Spleen (tissue), 13 donors: ENCODE measurements at regions of chr3 and their contacts with region 1.

Region 1: DNA sequence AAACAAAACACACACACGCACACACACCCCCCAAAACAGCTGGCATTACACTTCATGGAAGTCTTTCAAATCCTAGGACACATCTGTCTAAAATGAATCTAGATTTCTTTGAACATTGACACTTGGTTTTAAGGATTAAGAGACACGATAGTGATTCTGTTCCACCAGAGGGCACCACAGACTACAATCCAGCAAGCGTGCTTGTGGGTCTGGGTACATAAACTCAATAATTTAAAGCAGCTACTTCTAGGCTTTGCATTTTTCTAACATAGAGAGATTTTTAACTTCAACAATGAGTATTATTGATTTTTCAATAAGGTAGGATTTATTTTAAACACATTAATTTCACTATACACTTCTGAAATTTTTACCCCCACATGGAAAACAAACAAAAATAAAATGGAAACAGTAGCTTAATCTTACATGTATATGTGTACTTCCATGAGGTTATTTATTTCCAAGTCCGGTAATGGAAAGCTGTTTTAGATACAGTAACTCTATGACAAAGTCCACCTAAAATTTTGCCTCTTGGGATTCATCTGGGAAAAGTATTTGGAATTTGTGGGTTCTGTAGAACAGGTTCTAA is 564.0 kb upstream of the TGFBR2 start:
- DNase-seq: no peak
- H3K4me3 ChIP-seq: no peak overlapping the region
- H3K27ac ChIP-seq: no peak overlapping the region
- H3K4me1 ChIP-seq: peaks cover 0 to 8% (median 2%) of the 10 kb centered on the region in 6 donors
- H3K27me3 ChIP-seq: peaks cover 0 to 7% (median 0%) of the 10 kb centered on the region in 7 donors
- CTCF ChIP-seq: peak; percentile 31 to 66 (median 55)
- POLR2A ChIP-seq: no peak

Region 2: DNA sequence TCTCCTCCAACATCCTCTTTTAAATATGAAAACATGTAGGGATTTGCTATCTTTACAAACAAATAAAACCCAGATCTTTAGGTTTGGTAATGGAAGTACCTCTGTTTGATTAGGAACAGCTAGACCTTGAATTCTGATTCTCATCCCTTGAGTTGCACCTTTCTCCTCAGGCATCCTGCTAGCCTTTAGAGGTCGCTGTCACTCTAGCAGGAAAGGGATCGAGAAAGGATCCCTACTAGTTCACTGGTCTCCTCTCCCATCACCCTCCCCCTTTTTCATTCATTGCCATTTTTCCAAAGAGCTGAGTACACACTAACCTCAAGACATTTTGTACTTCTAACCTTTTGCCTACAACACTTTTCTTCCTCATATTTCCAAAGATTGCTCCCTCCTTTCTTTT is 191.7 kb before region 1 on chr3:
- intact Hi-C with region 1: no loop called
- DNase-seq: no peak
- H3K4me3 ChIP-seq: no peak overlapping the region
- H3K27ac ChIP-seq: no peak overlapping the region
- H3K4me1 ChIP-seq: no peaks in the 10 kb centered on the region
- H3K27me3 ChIP-seq: no peaks in the 10 kb centered on the region
- CTCF ChIP-seq: no peak
- POLR2A ChIP-seq: no peak

Region 3: GRCh38 chr3:30199096-30199759 is 156.9 kb after region 1 on chr3:
- intact Hi-C with region 1: loop called (anchors 10 kb)
- DNase-seq: peak; percentile 89
- H3K4me3 ChIP-seq: no peak overlapping the region
- H3K27ac ChIP-seq: no peak overlapping the region
- H3K4me1 ChIP-seq: peaks cover 0 to 28% (median 6%) of the 10 kb centered on the region in 6 donors
- H3K27me3 ChIP-seq: no peaks in the 10 kb centered on the region
- CTCF ChIP-seq: peak in 10 of 11 experiments; percentile 39 to 83 (median 73)
- POLR2A ChIP-seq: no peak

Region 4: GRCh38 chr3:30548600-30548999 is 506.2 kb after region 1 on chr3:
- intact Hi-C with region 1: no loop called
- DNase-seq: no peak
- H3K4me3 ChIP-seq: no peak overlapping the region
- H3K27ac ChIP-seq: no peak overlapping the region
- H3K4me1 ChIP-seq: peaks cover 0 to 17% (median 2%) of the 10 kb centered on the region in 6 donors
- H3K27me3 ChIP-seq: no peaks in the 10 kb centered on the region
- CTCF ChIP-seq: no peak
- POLR2A ChIP-seq: no peak